Upper lobe of right lung (tissue), 1 donor: ENCODE measurements at regions of chr1 and their contacts with region 1.

Region 1: DNA sequence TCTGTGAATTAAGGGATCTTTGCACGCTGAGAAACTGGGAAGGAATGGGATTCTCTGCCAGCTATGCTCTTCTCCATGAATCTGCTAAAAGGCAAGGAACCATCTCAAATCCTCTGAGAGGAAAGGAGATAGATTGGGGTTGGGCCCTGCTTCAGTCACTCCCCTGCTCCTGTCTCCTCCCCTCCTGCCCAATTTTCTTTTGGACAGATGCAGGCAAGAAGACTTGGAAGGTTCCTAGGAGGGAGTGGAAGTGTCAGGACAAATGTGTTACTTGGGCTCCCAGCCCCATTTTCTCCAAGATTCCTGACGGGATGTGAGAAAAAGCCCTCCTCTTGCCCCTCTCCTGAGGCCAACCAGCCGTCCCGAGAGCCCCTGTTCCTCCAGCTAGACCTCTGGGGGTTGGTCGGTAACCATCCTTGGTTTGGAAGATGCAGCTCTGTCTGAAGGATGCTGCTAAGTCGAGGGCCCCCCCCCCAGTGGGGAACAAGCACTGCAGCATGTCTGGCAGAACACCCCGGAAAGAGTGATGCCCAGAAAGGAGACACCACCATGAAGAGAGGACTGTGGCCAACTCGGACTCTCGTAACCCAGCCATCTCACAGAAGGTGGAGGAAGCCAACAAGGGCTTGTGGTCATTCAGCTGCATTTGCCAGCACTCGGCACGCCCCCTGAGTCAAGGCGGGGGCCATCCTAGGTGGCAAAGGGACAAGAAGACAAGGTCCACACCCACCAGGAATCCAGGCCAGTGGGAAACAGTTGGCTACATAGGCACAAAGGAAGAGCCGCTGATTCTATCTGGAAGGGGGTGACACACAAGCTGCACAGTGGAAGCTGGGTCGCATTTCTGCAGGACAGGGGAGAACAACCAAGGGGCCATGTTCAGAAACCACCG is 43.7 kb downstream of the CDK18 start:
- DNase-seq: no peak
- ATAC-seq: no peak
- H3K4me3 ChIP-seq: no peak overlapping the region
- H3K27ac ChIP-seq: no peak overlapping the region
- H3K4me1 ChIP-seq: peaks cover 11% of the 10 kb centered on the region
- H3K27me3 ChIP-seq: no peaks in the 10 kb centered on the region
- CTCF ChIP-seq: no peak

Region 2: DNA sequence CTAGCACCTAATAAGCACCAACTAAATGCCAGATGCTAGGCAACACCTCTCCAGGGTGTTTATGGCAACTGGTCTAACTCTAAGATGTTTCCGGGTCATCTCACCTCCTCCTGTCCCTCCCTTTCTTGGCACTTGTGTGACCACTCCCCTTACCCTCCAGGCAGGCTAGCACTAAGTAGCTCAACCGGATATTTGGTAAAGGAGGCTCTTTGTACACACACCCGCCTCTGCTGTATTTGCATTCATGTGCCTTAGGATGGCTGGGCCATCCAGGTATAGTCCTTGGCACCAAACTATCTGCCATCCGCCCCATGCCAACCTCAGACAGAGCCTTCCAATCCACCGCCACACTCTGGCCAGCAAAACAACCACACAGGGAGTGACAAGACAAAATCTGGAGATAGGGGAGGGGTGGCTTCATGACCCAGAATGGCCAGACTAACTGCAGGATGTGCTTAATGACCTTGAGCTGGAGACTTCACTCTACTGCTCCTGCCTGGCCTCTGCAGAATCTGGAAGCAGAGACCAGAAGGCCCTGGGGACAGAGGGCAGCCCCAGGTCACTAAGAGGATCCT is 15.8 kb after region 1 on chr1:
- intact Hi-C with region 1: loop called (anchors 2 kb)
- DNase-seq: peak; percentile 31
- ATAC-seq: peak; percentile 82
- H3K4me3 ChIP-seq: no peak overlapping the region
- H3K27ac ChIP-seq: no peak overlapping the region
- H3K4me1 ChIP-seq: peaks cover 3% of the 10 kb centered on the region
- H3K27me3 ChIP-seq: peaks cover 23% of the 10 kb centered on the region
- CTCF ChIP-seq: no peak